Naive thymus-derived CD4-positive, alpha-beta T cell (primary cell): ENCODE measurements at regions of chr6 and their contacts with region 1.

Region 1: DNA sequence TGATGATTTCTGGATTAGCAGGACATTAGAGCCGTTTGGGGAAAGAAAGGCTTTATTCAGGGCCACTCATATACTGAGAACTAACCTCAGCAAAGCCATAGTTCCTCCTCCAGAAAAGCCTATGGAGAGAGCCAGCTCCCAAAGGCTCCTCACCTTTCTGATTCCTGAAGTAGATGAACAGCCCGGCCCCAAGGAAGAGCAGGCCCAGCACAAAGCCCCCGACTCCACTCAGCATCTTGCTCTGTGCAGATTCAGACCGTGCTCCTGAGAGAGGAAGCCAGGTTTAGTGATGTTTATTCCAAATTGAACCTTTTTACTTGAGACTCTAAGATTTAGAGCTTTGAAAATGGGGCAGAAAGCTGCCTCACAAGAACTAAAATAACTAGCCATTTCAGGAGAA is 9.1 kb downstream of the HLA-DRB1 start:
- DNase-seq: no peak
- ATAC-seq: no peak
- H3K4me3 ChIP-seq: no peak overlapping the region
- H3K4me3 Mint-ChIP-seq: no peak overlapping the region
- H3K27ac ChIP-seq: no peak overlapping the region
- H3K27ac Mint-ChIP-seq: peak overlapping the region in 1 of 9 donors; percentile 37
- H3K4me1 ChIP-seq: no peaks in the 10 kb centered on the region
- H3K4me1 Mint-ChIP-seq: peaks cover 0 to 39% (median 15%) of the 10 kb centered on the region in 7 donors
- H3K27me3 ChIP-seq: no peaks in the 10 kb centered on the region
- H3K27me3 Mint-ChIP-seq: peaks cover 0 to 7% (median 3%) of the 10 kb centered on the region in 5 donors

Region 2: DNA sequence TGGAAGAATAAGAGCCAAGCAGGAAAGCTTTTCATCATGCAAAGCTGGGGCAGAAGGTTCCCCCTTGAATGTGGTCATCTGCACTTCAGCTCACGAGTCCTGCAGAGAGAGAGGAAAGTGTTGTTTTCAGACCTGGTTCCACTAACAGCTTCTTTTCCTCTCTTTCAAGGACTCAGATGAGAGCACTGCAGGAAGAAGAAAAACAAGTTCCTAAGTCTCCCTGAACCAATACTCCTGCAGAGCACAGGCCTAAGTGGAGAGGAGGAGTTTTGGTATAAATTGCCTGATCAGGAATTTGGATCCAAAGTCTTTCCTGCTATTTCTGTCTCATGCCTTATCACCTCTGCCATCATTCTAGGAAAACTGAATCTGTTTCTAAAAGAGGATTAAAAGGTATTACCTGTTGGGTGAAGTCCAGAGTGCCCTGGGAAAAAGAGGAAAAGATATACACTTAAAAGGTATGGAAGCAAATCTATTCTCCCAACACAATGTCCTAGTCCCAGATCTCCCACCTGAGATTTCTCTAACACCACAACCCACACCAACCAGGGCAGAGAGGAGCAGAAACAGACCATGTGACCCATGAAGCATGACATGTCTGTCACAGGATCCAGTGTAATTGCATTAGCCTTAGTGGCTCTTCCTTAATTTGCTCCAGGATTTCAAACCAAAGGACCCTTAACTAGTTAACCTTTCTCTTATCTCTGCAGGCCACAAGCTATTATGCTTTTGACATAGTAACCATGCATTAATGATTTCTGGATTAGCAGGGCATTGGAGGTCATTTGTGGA is 62.7 kb before region 1 on chr6:
- CTCF ChIA-PET with region 1: no interaction called
- POLR2A ChIA-PET with region 1: no interaction called
- intact Hi-C with region 1: loop called in 1 of 2 experiments (anchors 2 kb)
- DNase-seq: no peak
- ATAC-seq: no peak
- H3K4me3 ChIP-seq: no peak overlapping the region
- H3K4me3 Mint-ChIP-seq: no peak overlapping the region
- H3K27ac ChIP-seq: no peak overlapping the region
- H3K27ac Mint-ChIP-seq: no peak overlapping the region
- H3K4me1 ChIP-seq: no peaks in the 10 kb centered on the region
- H3K4me1 Mint-ChIP-seq: peaks cover 0 to 4% (median 0%) of the 10 kb centered on the region in 7 donors
- H3K27me3 ChIP-seq: no peaks in the 10 kb centered on the region
- H3K27me3 Mint-ChIP-seq: peaks cover 0 to 19% (median 0%) of the 10 kb centered on the region in 5 donors

Region 3: GRCh38 chr6:33091957-33092356 is 511.4 kb after region 1 on chr6:
- CTCF ChIA-PET with region 1: no interaction called
- POLR2A ChIA-PET with region 1: no interaction called
- intact Hi-C with region 1: no loop called
- DNase-seq: peak in 8 of 9 donors; percentile 13 to 55 (median 41)
- ATAC-seq: peak; percentile 91
- H3K4me3 ChIP-seq: no peak overlapping the region
- H3K4me3 Mint-ChIP-seq: no peak overlapping the region
- H3K27ac ChIP-seq: no peak overlapping the region
- H3K27ac Mint-ChIP-seq: no peak overlapping the region
- H3K4me1 ChIP-seq: no peaks in the 10 kb centered on the region
- H3K4me1 Mint-ChIP-seq: peaks cover 0 to 5% (median 0%) of the 10 kb centered on the region in 7 donors
- H3K27me3 ChIP-seq: no peaks in the 10 kb centered on the region
- H3K27me3 Mint-ChIP-seq: peaks cover 12 to 32% (median 18%) of the 10 kb centered on the region in 5 donors